Activated CD4-positive, alpha-beta T cell treated with anti-CD3 and anti-CD28 coated beads for 36 hours (primary cell): ENCODE measurements at regions of chr3 and their contacts with region 1.

Region 1: DNA sequence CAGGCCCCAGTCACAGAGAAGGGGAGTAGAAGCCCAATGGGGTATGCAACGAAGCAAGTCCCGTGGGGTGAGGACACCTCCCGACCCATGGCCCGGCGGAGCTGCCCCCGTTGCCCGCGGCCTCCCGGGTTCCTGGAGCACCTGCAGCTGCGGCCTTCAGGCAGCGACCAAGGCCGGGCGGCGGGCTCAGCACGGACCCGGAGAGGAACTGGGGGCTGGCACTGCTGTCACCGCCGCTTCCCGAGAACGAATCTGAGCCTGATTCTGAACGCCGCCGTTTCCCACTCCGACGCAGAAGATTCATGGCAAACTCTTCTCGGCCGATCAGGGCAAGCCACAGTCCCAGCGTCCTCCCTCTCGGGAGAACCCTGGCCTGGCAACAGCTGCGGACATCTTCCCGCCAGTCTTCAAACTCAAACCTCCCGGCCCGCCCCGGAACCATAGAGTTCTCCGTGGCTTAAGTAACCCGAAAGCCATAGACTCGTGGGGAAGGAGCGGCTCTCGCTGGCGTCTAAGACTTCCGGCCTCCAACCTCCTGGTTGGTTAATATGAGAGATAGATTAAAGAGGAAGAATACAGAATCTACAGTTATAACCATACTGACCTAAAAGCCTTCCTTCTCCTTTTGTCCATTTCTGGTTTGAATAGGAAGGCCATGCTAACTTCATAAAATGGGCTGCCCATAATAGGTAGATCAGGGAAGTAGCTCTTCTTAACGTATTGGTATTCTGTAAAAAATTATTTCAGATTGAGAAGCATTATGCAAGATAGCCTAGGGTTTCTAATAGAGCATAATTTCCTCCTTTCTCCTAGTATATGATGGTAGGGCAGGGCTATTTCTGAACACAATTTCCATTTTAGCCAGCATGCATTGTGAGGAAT is at the start of gene POLQ:
- DNase-seq: peak; percentile 92
- ATAC-seq: peak; percentile 98
- H3K4me3 Mint-ChIP-seq: peak within 1 kb of the TSS; percentile 91
- H3K27ac Mint-ChIP-seq: peak within 1 kb of the TSS; percentile 94
- H3K4me1 Mint-ChIP-seq: peaks cover 4% of the 10 kb centered on the region
- H3K27me3 Mint-ChIP-seq: no peaks in the 10 kb centered on the region
- total RNA-seq, gene POLQ: 22.8 to 23.4 TPM

Region 2: DNA sequence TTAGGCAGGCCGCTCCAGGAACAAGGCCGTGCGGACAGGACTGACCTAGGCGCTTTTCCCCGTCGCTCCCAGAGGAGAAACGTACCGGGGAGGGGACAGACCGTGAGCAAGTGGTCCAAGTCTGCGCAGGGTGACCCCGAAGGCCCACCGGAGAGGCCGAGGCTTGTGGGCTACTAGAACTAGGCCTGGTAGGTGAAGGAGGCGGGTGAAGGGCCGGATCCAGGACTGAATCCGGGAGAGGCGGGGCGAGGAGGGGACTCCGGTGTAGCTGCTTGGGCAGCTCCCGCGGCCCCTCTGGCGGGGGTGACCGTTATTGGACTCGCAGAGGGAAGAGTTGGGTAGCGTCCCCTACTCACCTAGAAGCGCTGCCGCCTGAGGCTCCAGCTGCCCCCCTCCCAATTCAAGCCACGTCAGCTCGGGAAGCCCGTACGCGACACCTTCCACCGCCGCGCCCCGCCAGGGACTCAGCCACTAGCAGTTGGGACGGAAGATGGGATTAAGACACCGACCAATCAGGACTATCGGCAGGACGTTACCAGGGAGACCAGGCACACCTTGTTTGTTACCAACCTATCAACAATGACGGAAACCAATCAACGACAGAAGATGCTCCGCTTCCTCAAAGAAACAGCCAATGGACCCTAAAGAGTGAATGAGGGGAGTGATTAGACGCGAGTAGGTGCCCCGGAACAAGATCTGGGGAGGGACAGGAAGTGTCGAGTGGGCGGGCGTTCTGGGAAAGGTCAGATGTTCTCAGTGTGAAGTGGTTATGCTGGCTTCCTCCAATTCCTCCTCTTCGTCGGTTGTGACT is 203.7 kb after region 1 on chr3 and contains the start of gene GOLGB1:
- CTCF ChIA-PET with region 1: interaction called, 4 read pairs
- POLR2A ChIA-PET with region 1: no interaction called
- intact Hi-C with region 1: loop called (anchors 1 kb)
- DNase-seq: peak; percentile 96
- ATAC-seq: peak; percentile 98
- H3K4me3 Mint-ChIP-seq: no peak within 1 kb of the TSS
- H3K27ac Mint-ChIP-seq: peak within 1 kb of the TSS; percentile 60
- H3K4me1 Mint-ChIP-seq: peaks cover 10% of the 10 kb centered on the region
- H3K27me3 Mint-ChIP-seq: no peaks in the 10 kb centered on the region
- total RNA-seq, gene GOLGB1: 19.0 to 19.5 TPM

Region 3: GRCh38 chr3:121894301-121894990 is 348.6 kb after region 1 on chr3 and contains the start of gene SLC15A2:
- CTCF ChIA-PET with region 1: no interaction called
- POLR2A ChIA-PET with region 1: interaction called, 13 read pairs
- intact Hi-C with region 1: no loop called
- DNase-seq: no peak
- ATAC-seq: no peak
- H3K4me3 Mint-ChIP-seq: no peak within 1 kb of the TSS
- H3K27ac Mint-ChIP-seq: no peak within 1 kb of the TSS
- H3K4me1 Mint-ChIP-seq: no peaks in the 10 kb centered on the region
- H3K27me3 Mint-ChIP-seq: no peaks in the 10 kb centered on the region
- total RNA-seq, gene SLC15A2: 0.53 to 0.59 TPM

Region 4: DNA sequence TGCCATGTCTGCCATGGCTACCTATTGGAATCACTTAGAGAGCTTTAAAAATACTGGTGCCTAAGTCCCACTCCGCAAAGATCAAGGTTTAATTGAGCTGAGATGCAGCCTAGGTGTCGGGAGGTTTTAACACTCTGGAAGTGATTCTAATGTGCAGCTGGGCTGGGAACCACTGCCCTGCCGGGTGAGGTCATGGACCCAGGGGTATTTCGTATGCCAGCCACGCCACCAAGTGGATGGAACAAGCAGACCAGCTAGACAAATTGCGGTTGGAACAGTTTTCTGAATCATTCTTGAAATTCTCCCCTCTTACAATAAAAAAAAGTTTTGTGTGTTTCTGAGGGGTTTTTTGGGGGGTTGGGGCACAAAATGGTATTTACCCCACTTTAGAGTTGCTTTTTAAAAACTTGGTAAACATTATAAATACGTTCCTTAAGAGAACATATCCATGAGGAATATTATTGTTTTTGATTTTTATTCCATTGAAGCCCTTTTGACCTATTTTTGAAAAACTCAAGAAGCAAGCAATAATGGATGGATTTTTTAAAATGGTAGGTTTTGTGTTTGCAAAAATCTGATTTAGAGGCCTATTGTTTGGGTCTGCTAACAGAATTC is 713.0 kb after region 1 on chr3:
- CTCF ChIA-PET with region 1: interaction called, 4 read pairs
- POLR2A ChIA-PET with region 1: no interaction called
- intact Hi-C with region 1: loop called (anchors 1 to 2 kb)
- DNase-seq: peak; percentile 83
- ATAC-seq: peak; percentile 92
- H3K4me3 Mint-ChIP-seq: no peak overlapping the region
- H3K27ac Mint-ChIP-seq: no peak overlapping the region
- H3K4me1 Mint-ChIP-seq: peaks cover 18% of the 10 kb centered on the region
- H3K27me3 Mint-ChIP-seq: no peaks in the 10 kb centered on the region

Region 5: DNA sequence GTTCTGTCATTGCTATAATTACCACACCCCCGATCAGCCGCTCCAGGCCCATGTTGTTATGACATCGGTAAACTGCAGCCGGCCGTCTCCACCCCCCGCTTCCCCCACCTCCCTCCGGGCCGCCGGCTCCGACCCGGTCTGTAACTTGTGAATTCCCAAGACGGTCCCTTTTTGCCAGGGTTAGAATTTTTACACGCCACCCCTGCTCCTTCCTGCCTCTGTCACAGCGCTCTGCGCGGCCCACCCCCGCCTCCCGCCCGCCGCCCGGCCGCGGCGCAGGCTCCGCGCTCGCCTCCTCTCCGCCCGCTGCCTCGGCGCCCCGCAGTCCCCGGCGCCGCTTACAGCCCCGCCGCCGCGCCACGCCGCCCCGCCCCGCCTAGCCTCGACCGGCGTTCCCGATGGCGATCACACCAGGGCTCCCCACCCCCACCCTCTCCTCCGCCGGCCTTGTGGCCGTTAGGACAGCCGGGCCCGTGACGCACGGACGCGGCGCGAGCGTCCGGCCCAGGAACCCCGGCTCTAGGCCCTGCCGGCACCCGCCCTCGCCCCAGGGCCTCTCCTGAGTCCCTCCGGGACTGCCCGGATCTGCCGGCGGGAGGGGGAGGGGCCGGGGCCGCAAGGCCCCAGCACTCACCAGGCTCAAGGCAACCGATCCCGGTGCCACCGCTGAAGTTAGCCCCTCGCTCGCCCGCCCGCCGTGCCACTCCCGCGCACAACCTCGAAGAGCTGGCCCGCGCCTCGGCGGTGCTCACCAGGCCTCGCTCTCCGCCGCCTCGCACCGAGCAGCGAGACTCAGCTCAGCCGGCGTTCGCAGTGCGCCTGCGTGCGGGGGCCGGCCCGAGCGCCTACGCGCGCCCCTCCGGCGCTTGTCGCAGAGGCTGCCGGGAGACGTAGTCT is 968.6 kb after region 1 on chr3 and contains the start of gene KPNA1:
- CTCF ChIA-PET with region 1: no interaction called
- POLR2A ChIA-PET with region 1: no interaction called
- intact Hi-C with region 1: loop called in 1 of 2 experiments (anchors 1 kb)
- DNase-seq: peak; percentile 93
- ATAC-seq: peak; percentile 93
- H3K4me3 Mint-ChIP-seq: peak within 1 kb of the TSS; percentile 77
- H3K27ac Mint-ChIP-seq: peak within 1 kb of the TSS; percentile 84
- H3K4me1 Mint-ChIP-seq: peaks cover 39% of the 10 kb centered on the region
- H3K27me3 Mint-ChIP-seq: no peaks in the 10 kb centered on the region
- total RNA-seq, gene KPNA1: 37.5 to 42.6 TPM

Region 6: DNA sequence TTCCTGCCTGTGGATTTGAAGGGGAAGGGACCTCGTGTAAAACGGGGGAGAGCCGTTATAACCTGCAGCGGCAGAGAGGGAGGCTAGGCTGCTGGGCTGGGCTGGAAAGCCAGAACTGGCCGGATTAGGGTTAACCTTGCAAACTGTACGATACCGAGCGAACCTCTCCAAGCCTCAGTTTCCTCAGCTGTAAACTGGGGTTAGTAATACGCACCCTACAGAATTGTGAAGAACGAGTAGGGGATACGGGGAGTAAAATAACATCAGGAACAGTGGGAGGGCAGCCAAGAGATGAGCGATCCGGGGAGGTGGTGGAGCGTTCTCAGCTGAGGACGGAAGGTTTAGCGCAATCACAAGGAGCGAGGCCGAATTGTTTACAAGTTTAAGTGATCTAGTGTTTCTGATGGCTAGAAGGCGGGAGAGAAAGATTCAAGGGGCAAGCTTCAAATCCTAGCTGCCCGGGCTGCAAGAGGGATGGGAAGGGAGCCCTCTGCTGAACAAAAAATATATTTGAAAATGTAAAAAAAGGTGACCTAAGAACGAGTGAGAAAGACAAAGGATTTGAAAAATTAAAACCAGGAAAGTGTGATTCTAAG is 1482.5 kb after region 1 on chr3:
- CTCF ChIA-PET with region 1: no interaction called
- POLR2A ChIA-PET with region 1: no interaction called
- intact Hi-C with region 1: loop called in 1 of 2 experiments (anchors 5 kb)
- DNase-seq: peak; percentile 47
- ATAC-seq: peak; percentile 51
- H3K4me3 Mint-ChIP-seq: peak overlapping the region; percentile 44
- H3K27ac Mint-ChIP-seq: no peak overlapping the region
- H3K4me1 Mint-ChIP-seq: peaks cover 19% of the 10 kb centered on the region
- H3K27me3 Mint-ChIP-seq: peaks cover 54% of the 10 kb centered on the region